Activated CD4-positive, alpha-beta T cell treated with anti-CD3 and anti-CD28 coated beads for 36 hours (primary cell): ENCODE measurements at regions of chr18 and their contacts with region 1.

Region 1: GRCh38 chr18:46173393-46174341 is 69.5 kb downstream of the HAUS1 start:
- DNase-seq: peak; percentile 96
- ATAC-seq: peak; percentile 90
- H3K4me3 Mint-ChIP-seq: peak overlapping the region; percentile 97
- H3K27ac Mint-ChIP-seq: peak overlapping the region; percentile 99
- H3K4me1 Mint-ChIP-seq: peaks cover 37% of the 10 kb centered on the region
- H3K27me3 Mint-ChIP-seq: no peaks in the 10 kb centered on the region

Region 2: GRCh38 chr18:46097801-46098615 is 75.7 kb before region 1 on chr18 and contains the start of gene ATP5F1A:
- CTCF ChIA-PET with region 1: interaction called, 10 read pairs
- POLR2A ChIA-PET with region 1: no interaction called
- intact Hi-C with region 1: loop called (anchors 1 to 5 kb)
- DNase-seq: peak; percentile 94
- ATAC-seq: peak; percentile 91
- H3K4me3 Mint-ChIP-seq: peak within 1 kb of the TSS; percentile 97
- H3K27ac Mint-ChIP-seq: peak within 1 kb of the TSS; percentile 99
- H3K4me1 Mint-ChIP-seq: peaks cover 31% of the 10 kb centered on the region
- H3K27me3 Mint-ChIP-seq: no peaks in the 10 kb centered on the region
- total RNA-seq, gene ATP5F1A: 375 to 515 TPM

Region 3: GRCh38 chr18:46207985-46208384 is 34.3 kb after region 1 on chr18:
- CTCF ChIA-PET with region 1: interaction called, 28 read pairs
- POLR2A ChIA-PET with region 1: interaction called, 11 read pairs
- intact Hi-C with region 1: loop called (anchors 1 kb)
- DNase-seq: no peak
- ATAC-seq: peak; percentile 61
- H3K4me3 Mint-ChIP-seq: no peak overlapping the region
- H3K27ac Mint-ChIP-seq: peak overlapping the region; percentile 35
- H3K4me1 Mint-ChIP-seq: peaks cover 92% of the 10 kb centered on the region
- H3K27me3 Mint-ChIP-seq: no peaks in the 10 kb centered on the region

Region 4: GRCh38 chr18:46250084-46250811 is 76.6 kb after region 1 on chr18:
- CTCF ChIA-PET with region 1: interaction called, 23 read pairs
- POLR2A ChIA-PET with region 1: interaction called, 3 read pairs
- intact Hi-C with region 1: loop called (anchors 1 to 2 kb)
- DNase-seq: peak; percentile 61
- ATAC-seq: peak; percentile 90
- H3K4me3 Mint-ChIP-seq: peak overlapping the region; percentile 62
- H3K27ac Mint-ChIP-seq: peak overlapping the region; percentile 97
- H3K4me1 Mint-ChIP-seq: peaks cover 64% of the 10 kb centered on the region
- H3K27me3 Mint-ChIP-seq: no peaks in the 10 kb centered on the region

Region 5: GRCh38 chr18:46333431-46334135 is 159.9 kb after region 1 on chr18:
- CTCF ChIA-PET with region 1: no interaction called
- POLR2A ChIA-PET with region 1: no interaction called
- intact Hi-C with region 1: loop called (anchors 2 to 5 kb)
- DNase-seq: peak; percentile 62
- ATAC-seq: peak; percentile 67
- H3K4me3 Mint-ChIP-seq: peak overlapping the region; percentile 65
- H3K27ac Mint-ChIP-seq: peak overlapping the region; percentile 27
- H3K4me1 Mint-ChIP-seq: peaks cover 12% of the 10 kb centered on the region
- H3K27me3 Mint-ChIP-seq: peaks cover 54% of the 10 kb centered on the region

Region 6: GRCh38 chr18:46356278-46357033 is 182.8 kb after region 1 on chr18:
- CTCF ChIA-PET with region 1: no interaction called
- POLR2A ChIA-PET with region 1: no interaction called
- intact Hi-C with region 1: no loop called
- DNase-seq: no peak
- ATAC-seq: no peak
- H3K4me3 Mint-ChIP-seq: no peak overlapping the region
- H3K27ac Mint-ChIP-seq: no peak overlapping the region
- H3K4me1 Mint-ChIP-seq: peaks cover 3% of the 10 kb centered on the region
- H3K27me3 Mint-ChIP-seq: no peaks in the 10 kb centered on the region

Region 7: DNA sequence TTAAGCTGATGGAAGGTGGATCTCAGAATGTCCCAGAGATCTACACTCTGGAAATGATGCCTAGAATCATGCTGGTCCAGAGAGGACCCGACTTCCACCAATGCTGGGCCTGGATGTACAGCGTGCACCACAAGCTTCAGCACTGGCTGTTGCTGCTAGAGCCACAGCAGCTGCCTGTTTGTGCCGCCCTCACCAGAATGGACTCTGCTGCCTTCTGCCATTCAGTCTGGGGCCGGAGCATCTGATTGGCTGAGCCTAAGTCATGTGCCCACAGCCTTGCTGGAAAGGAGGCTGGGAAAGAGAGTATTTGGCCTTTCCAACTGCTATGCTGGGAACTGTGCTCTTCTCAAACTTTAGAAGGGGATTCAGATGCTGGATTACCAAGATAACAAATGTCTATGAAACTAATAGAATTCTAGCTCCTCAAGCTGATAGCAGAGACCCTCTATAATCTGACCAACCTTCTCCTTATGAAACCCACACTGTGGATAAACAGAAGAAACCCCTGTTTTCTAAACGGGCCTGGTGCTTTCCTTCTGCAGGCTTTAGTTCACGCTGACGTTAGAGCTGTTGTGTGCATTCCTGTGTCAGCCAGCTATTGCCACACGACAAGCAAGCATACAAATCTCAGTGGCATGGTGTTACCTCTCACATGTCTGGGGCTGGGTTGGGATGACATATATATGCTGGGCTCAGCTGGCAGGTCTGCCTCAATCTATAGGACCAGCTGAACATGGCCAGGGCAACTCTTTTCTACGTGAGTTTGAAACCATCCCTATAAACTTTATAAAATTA is 487.5 kb after region 1 on chr18:
- CTCF ChIA-PET with region 1: interaction called, 23 read pairs
- POLR2A ChIA-PET with region 1: no interaction called
- intact Hi-C with region 1: loop called (anchors 1 kb)
- DNase-seq: no peak
- ATAC-seq: no peak
- H3K4me3 Mint-ChIP-seq: no peak overlapping the region
- H3K27ac Mint-ChIP-seq: no peak overlapping the region
- H3K4me1 Mint-ChIP-seq: no peaks in the 10 kb centered on the region
- H3K27me3 Mint-ChIP-seq: no peaks in the 10 kb centered on the region